HCT116 (cell line): ENCODE measurements at regions of chr15 and their contacts with region 1.

Region 1: GRCh38 chr15:28123408-28124023 is 24.4 kb upstream of the OCA2 start:
- DNase-seq: peak; percentile 41
- ATAC-seq: peak; percentile 93
- H3K4me3 ChIP-seq: no peak overlapping the region
- H3K27ac ChIP-seq: no peak overlapping the region
- H3K4me1 ChIP-seq: no peaks in the 10 kb centered on the region
- H3K27me3 ChIP-seq: no peaks in the 10 kb centered on the region
- CTCF ChIP-seq: peak; percentile 20 to 81 (median 76); a peak in 5 of 6 replicates
- POLR2A ChIP-seq: no peak
- RAD21 ChIP-seq: peak; percentile 28; the same call in 1 of the 2 replicates

Region 2: DNA sequence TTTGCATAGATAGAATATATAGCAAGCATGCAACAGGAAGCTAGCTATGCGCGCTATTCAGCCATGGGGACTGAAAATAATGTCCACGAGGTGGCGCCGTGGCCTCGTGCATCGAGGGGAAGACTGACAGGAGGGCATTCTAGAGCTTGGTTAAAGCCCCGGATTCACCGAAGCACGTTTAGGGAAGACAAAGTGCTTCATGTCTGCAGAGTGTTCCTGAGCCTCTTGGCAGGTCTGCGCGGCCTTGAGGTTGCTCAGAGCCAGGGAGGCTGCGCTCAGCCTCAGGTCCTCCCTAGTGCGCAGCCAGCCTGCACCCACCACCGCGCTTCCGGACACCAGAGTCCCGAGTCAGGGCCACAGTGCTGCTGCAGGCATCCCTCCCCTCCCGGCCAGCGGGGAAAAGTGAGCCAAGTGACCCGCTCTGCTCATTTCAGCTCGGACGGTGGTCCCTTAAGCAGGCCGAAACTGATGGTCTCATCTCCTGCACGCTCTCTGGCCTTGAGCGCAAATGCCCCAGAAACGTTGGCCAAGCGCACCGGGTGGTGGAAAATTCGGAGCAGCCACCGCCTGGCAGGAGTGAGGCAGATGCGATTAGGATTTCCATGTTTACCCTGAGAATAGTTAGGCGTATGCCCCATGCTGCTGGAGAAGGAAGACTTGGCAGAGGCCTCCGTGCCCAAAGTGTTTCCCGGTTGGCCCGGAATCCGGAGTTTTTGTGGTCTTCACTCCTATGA is 1231.9 kb before region 1 on chr15:
- CTCF ChIA-PET with region 1: interaction called, 3 read pairs
- POLR2A ChIA-PET with region 1: no interaction called
- RAD21 ChIA-PET with region 1: no interaction called
- intact Hi-C with region 1: loop called (anchors 1 kb)
- DNase-seq: no peak
- ATAC-seq: no peak
- H3K4me3 ChIP-seq: no peak overlapping the region
- H3K27ac ChIP-seq: no peak overlapping the region
- H3K4me1 ChIP-seq: no peaks in the 10 kb centered on the region
- H3K27me3 ChIP-seq: no peaks in the 10 kb centered on the region
- CTCF ChIP-seq: peak in 2 of 3 experiments; percentile 20 to 36; a peak in 1 of 6 replicates
- POLR2A ChIP-seq: no peak
- RAD21 ChIP-seq: peak; percentile 24; the same call in 1 of the 2 replicates

Region 3: GRCh38 chr15:27928386-27928785 is 195.1 kb before region 1 on chr15:
- CTCF ChIA-PET with region 1: no interaction called
- POLR2A ChIA-PET with region 1: no interaction called
- RAD21 ChIA-PET with region 1: no interaction called
- intact Hi-C with region 1: no loop called
- DNase-seq: no peak
- ATAC-seq: no peak
- H3K4me3 ChIP-seq: no peak overlapping the region
- H3K27ac ChIP-seq: no peak overlapping the region
- H3K4me1 ChIP-seq: no peaks in the 10 kb centered on the region
- H3K27me3 ChIP-seq: no peaks in the 10 kb centered on the region
- CTCF ChIP-seq: no peak
- POLR2A ChIP-seq: no peak
- RAD21 ChIP-seq: no peak

Region 4: DNA sequence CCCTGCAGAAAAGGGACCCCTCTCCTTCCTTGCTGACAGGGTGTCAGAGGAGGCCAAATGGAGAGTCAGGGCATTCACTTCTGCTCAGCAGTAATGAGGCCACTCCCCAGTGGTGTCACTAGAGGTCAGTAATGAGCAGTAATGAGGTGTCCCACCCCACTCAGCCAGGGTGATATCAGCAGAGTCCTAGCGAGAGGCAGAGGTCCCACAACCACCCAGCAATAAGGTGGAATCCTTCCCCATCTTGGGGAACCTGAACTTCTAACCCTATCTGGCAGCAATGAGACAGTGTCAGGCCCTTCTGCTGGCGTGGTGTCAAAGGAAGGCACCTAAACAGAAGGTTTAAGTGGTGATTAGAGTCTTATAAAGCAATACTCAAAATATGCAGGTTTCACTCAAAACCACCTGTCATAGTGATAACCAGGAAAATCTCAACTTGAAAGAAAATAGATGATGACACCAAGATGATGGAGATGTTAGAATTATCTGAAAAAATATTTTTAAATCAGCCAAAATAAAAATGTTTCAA is 37.3 kb before region 1 on chr15:
- CTCF ChIA-PET with region 1: interaction called, 3 read pairs
- POLR2A ChIA-PET with region 1: no interaction called
- RAD21 ChIA-PET with region 1: no interaction called
- intact Hi-C with region 1: loop called (anchors 1 kb)
- DNase-seq: peak; percentile 26
- ATAC-seq: peak; percentile 100
- H3K4me3 ChIP-seq: no peak overlapping the region
- H3K27ac ChIP-seq: no peak overlapping the region
- H3K4me1 ChIP-seq: no peaks in the 10 kb centered on the region
- H3K27me3 ChIP-seq: no peaks in the 10 kb centered on the region
- CTCF ChIP-seq: peak; percentile 11 to 78 (median 72); a peak in 4 of 6 replicates
- POLR2A ChIP-seq: no peak
- RAD21 ChIP-seq: no peak

Region 5: DNA sequence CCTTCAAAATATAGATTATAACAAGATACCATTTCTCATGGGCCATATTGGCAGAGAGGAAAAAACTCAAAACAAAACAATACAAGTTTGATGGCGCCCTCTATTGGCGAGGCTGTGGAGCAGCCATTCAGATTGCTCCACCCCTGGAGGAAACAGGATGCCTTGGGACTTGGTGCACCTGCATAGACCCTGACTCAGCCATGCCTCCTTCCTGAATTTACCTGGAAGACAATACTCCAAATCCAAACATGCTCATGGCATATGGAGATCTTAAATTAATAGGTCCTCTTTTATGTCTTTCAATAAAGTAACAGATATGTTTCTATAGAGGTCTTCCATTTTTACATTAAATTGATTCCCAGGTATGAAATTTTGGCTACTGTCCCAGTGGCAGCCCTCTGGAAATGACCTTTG is 852.3 kb after region 1 on chr15:
- CTCF ChIA-PET with region 1: no interaction called
- POLR2A ChIA-PET with region 1: no interaction called
- RAD21 ChIA-PET with region 1: no interaction called
- intact Hi-C with region 1: loop called (anchors 10 kb)
- DNase-seq: peak; percentile 39
- ATAC-seq: peak; percentile 78
- H3K4me3 ChIP-seq: no peak overlapping the region
- H3K27ac ChIP-seq: no peak overlapping the region
- H3K4me1 ChIP-seq: peaks cover 0 to 14% of the 10 kb centered on the region in 2 experiments; a peak in 3 of 4 replicates
- H3K27me3 ChIP-seq: peaks cover 10% of the 10 kb centered on the region; the same call in 1 of the 2 replicates
- CTCF ChIP-seq: peak; percentile 54 to 94 (median 90); a peak in 5 of 6 replicates
- POLR2A ChIP-seq: no peak
- RAD21 ChIP-seq: peak; percentile 62